Activated CD4-positive, alpha-beta T cell treated with anti-CD3 and anti-CD28 coated beads for 36 hours (primary cell): ENCODE measurements at regions of chr10 and their contacts with region 1.

Region 1: GRCh38 chr10:3785257-3785850 is 345 bp upstream of the KLF6 start:
- DNase-seq: peak; percentile 99
- ATAC-seq: peak; percentile 78
- H3K4me3 Mint-ChIP-seq: peak overlapping the region; percentile 82
- H3K27ac Mint-ChIP-seq: peak overlapping the region; percentile 96
- H3K4me1 Mint-ChIP-seq: peaks cover 32% of the 10 kb centered on the region
- H3K27me3 Mint-ChIP-seq: no peaks in the 10 kb centered on the region

Region 2: GRCh38 chr10:3239066-3239919 is 546.1 kb before region 1 on chr10:
- CTCF ChIA-PET with region 1: no interaction called
- POLR2A ChIA-PET with region 1: no interaction called
- intact Hi-C with region 1: loop called (anchors 2 to 5 kb)
- DNase-seq: peak; percentile 85
- ATAC-seq: peak; percentile 93
- H3K4me3 Mint-ChIP-seq: no peak overlapping the region
- H3K27ac Mint-ChIP-seq: no peak overlapping the region
- H3K4me1 Mint-ChIP-seq: peaks cover 2% of the 10 kb centered on the region
- H3K27me3 Mint-ChIP-seq: peaks cover 23% of the 10 kb centered on the region

Region 3: DNA sequence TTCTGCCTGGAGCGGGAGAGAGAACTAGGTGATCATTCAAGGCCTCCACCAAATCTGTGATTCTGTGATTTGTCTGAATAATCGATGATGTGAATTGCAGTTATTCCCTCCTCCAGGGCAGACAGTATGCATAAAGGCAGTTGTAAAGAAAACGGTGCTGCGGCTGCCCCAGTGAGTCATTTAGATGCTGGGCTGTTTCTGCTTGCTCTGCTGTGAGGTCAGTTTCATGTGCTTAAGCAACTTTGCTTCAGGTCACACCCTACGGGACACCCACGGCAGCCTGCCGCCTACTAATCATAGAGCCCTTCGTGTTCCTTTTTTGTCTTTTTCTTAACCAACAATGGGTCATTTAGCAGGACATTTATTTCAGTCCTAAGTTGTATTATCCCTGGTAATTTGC is 454.7 kb before region 1 on chr10:
- CTCF ChIA-PET with region 1: no interaction called
- POLR2A ChIA-PET with region 1: no interaction called
- intact Hi-C with region 1: no loop called
- DNase-seq: no peak
- ATAC-seq: no peak
- H3K4me3 Mint-ChIP-seq: no peak overlapping the region
- H3K27ac Mint-ChIP-seq: no peak overlapping the region
- H3K4me1 Mint-ChIP-seq: no peaks in the 10 kb centered on the region
- H3K27me3 Mint-ChIP-seq: peaks cover 6% of the 10 kb centered on the region

Region 4: GRCh38 chr10:3740157-3740871 is 45.0 kb before region 1 on chr10:
- CTCF ChIA-PET with region 1: no interaction called
- POLR2A ChIA-PET with region 1: interaction called, 23 read pairs
- intact Hi-C with region 1: loop called (anchors 1 kb)
- DNase-seq: peak; percentile 38
- ATAC-seq: peak; percentile 85
- H3K4me3 Mint-ChIP-seq: no peak overlapping the region
- H3K27ac Mint-ChIP-seq: peak overlapping the region; percentile 60
- H3K4me1 Mint-ChIP-seq: peaks cover 33% of the 10 kb centered on the region
- H3K27me3 Mint-ChIP-seq: no peaks in the 10 kb centered on the region

Region 5: GRCh38 chr10:3805791-3806461 is 20.6 kb after region 1 on chr10:
- CTCF ChIA-PET with region 1: interaction called, 9 read pairs
- POLR2A ChIA-PET with region 1: interaction called, 165 read pairs
- intact Hi-C with region 1: loop called (anchors 1 kb)
- DNase-seq: peak; percentile 59
- ATAC-seq: no peak
- H3K4me3 Mint-ChIP-seq: peak overlapping the region; percentile 46
- H3K27ac Mint-ChIP-seq: no peak overlapping the region
- H3K4me1 Mint-ChIP-seq: peaks cover 63% of the 10 kb centered on the region
- H3K27me3 Mint-ChIP-seq: no peaks in the 10 kb centered on the region

Region 6: GRCh38 chr10:3852147-3852904 is 67.0 kb after region 1 on chr10:
- CTCF ChIA-PET with region 1: no interaction called
- POLR2A ChIA-PET with region 1: interaction called, 46 read pairs
- intact Hi-C with region 1: loop called in 1 of 2 experiments (anchors 1 kb)
- DNase-seq: peak; percentile 83
- ATAC-seq: peak; percentile 93
- H3K4me3 Mint-ChIP-seq: peak overlapping the region; percentile 34
- H3K27ac Mint-ChIP-seq: peak overlapping the region; percentile 94
- H3K4me1 Mint-ChIP-seq: peaks cover 48% of the 10 kb centered on the region
- H3K27me3 Mint-ChIP-seq: no peaks in the 10 kb centered on the region

Region 7: DNA sequence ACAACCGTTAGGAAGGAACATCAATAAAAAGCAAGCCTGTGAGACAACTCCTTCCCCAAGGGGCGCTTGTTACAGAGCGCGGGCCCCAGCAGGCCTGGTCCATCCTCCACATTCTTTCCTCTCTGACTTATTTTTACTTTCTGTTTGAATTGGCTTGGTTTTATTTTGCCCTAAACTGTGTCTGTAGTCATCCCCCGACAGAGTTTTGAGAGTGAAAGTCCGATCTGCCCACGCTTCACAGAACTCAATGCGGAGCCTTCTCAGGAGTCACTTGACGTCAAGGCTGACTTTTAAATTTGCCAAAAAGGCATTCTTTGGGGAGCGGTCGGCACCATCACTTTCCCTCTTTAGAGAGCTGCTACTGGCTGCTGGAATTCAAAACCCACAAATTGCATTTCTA is 149.8 kb after region 1 on chr10:
- CTCF ChIA-PET with region 1: no interaction called
- POLR2A ChIA-PET with region 1: interaction called, 6 read pairs
- intact Hi-C with region 1: loop called (anchors 1 to 2 kb)
- DNase-seq: peak; percentile 89
- ATAC-seq: peak; percentile 98
- H3K4me3 Mint-ChIP-seq: peak overlapping the region; percentile 37
- H3K27ac Mint-ChIP-seq: peak overlapping the region; percentile 91
- H3K4me1 Mint-ChIP-seq: peaks cover 50% of the 10 kb centered on the region
- H3K27me3 Mint-ChIP-seq: no peaks in the 10 kb centered on the region

Region 8: GRCh38 chr10:4651404-4652037 is 866.2 kb after region 1 on chr10:
- CTCF ChIA-PET with region 1: no interaction called
- POLR2A ChIA-PET with region 1: no interaction called
- intact Hi-C with region 1: loop called (anchors 2 to 5 kb)
- DNase-seq: peak; percentile 30
- ATAC-seq: peak; percentile 85
- H3K4me3 Mint-ChIP-seq: peak overlapping the region; percentile 36
- H3K27ac Mint-ChIP-seq: peak overlapping the region; percentile 90
- H3K4me1 Mint-ChIP-seq: peaks cover 37% of the 10 kb centered on the region
- H3K27me3 Mint-ChIP-seq: peaks cover 6% of the 10 kb centered on the region